H1 (cell line): ENCODE measurements at regions of chr1 and their contacts with region 1.

Region 1: DNA sequence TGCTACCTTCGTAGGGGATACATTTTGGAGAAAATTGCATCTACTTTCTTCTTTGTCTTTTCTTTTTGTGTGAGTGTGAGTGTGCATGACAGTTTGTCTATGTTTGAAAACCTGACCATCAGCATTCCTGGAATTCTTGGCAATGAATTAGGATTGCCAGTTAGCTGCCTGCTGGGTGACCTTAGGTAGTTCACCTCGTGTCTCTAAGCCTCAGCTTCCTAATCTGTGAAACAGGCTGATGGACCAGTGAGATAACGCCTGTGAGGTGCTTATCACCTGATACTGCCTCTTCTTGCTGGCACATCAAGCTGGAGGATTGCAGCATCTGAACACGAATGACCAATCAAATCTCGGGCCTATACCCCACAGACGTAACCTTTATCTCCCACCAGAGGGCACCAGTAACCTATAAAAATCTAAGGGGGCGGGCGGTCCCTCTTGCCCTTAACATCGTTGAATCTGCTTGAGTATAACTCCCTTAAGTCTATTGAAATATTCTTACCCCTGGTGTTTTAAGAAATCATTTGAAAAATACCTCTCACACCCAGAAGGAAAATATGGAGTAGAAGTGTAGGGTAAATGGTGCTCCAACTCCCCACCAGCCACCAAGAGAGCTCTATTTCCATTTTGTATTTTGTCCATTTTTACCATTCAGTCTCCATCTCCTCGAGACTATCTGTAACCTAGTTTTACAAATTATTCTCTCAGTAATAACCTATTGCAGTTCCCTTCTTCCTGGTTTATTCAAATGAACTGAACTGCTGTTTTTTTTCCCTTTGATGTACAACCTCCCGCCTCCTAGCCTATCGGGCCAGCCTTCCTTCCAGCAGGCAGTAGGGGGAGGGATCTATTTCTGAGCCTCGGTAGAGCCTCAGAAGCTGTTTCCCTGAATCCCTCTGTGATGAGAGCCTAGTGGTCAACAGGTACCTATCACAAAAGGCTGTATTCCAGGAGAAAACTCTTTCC is 49.7 kb downstream of the MDM4 start:
- DNase-seq: peak in 1 of 2 experiments; percentile 63
- H3K4me3 ChIP-seq: peak overlapping the region in 1 of 4 experiments; percentile 34; a peak in 2 of 8 replicates
- H3K27ac ChIP-seq: peak overlapping the region; percentile 4; the same call in 1 of the 2 replicates
- H3K4me1 ChIP-seq: peaks cover 3 to 24% (median 13%) of the 10 kb centered on the region in 4 experiments; a peak in 6 of 7 replicates
- H3K27me3 ChIP-seq: no peaks in the 10 kb centered on the region; a peak in 1 of 7 replicates
- CTCF ChIP-seq: peak; percentile 36 to 83 (median 73)
- EP300 ChIP-seq: peak in 1 of 2 experiments; percentile 85; a peak in 1 of 3 replicates
- POLR2A ChIP-seq: no peak
- RAD21 ChIP-seq: peak; percentile 84 to 89

Region 2: DNA sequence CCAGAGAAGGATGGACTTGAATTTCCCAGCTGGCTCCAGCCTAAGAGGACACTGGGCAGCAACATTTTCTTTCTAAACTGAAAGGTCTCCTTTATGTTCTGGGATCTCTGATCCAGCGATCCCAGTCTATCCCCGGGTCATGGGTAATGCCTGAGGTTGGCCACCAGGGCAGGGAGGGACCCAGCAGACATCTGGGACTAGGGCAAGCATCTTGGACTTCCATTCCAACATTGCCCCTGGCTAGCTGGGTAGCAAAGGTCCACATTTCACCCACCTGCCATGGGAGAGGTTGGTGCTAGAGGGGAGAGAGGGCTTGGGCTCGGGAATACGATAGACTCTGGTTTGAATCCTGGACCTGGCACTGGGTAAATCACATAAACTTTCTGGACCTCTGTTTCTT is 35.1 kb after region 1 on chr1:
- CTCF ChIA-PET with region 1: interaction called, 20 read pairs
- POLR2A ChIA-PET with region 1: no interaction called
- DNase-seq: no peak
- H3K4me3 ChIP-seq: no peak overlapping the region
- H3K27ac ChIP-seq: no peak overlapping the region
- H3K4me1 ChIP-seq: peaks cover 10 to 20% (median 11%) of the 10 kb centered on the region in 4 experiments
- H3K27me3 ChIP-seq: no peaks in the 10 kb centered on the region
- CTCF ChIP-seq: peak; percentile 48 to 69 (median 62)
- EP300 ChIP-seq: no peak
- POLR2A ChIP-seq: no peak
- RAD21 ChIP-seq: peak; percentile 24 to 47

Region 3: DNA sequence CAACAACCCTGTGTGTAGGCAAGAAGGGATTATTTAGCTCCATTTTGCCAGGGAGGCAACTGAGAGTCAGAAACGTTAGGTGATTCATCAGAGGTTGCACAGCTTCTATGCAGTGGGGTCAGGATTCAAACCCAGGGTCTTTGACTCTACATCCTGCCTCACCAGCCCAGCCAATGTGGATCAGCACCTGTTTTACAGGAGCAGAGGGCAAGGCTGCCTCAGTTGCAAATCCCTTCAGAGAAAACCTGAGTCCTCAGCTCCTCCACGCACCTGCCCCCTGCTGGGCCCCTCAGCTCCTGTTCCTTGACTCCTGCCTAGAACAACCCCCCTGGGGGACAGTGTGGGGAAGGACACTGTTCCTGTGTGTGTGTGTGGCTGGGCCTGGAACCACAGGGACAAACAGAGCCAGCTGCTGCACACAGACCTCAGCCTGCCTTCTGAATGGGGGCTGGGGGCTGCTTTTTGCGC is 58.0 kb after region 1 on chr1:
- CTCF ChIA-PET with region 1: interaction called, 21 read pairs
- POLR2A ChIA-PET with region 1: interaction called, 3 read pairs
- DNase-seq: no peak
- H3K4me3 ChIP-seq: no peak overlapping the region
- H3K27ac ChIP-seq: no peak overlapping the region
- H3K4me1 ChIP-seq: peaks cover 3 to 11% (median 6%) of the 10 kb centered on the region in 4 experiments; a peak in 6 of 7 replicates
- H3K27me3 ChIP-seq: no peaks in the 10 kb centered on the region
- CTCF ChIP-seq: peak; percentile 40 to 81 (median 44)
- EP300 ChIP-seq: no peak
- POLR2A ChIP-seq: no peak
- RAD21 ChIP-seq: peak; percentile 31 to 48; a peak in 3 of 4 replicates

Region 4: GRCh38 chr1:204685236-204686006 is 119.5 kb after region 1 on chr1 and contains the start of gene LRRN2:
- CTCF ChIA-PET with region 1: interaction called, 16 read pairs
- POLR2A ChIA-PET with region 1: no interaction called
- DNase-seq: peak in 1 of 2 experiments; percentile 66
- H3K4me3 ChIP-seq: peak within 1 kb of the TSS; percentile 43 to 66 (median 60)
- H3K27ac ChIP-seq: no peak within 1 kb of the TSS
- H3K4me1 ChIP-seq: peaks cover 0 to 12% (median 7%) of the 10 kb centered on the region in 4 experiments; a peak in 6 of 7 replicates
- H3K27me3 ChIP-seq: peaks cover 13 to 50% (median 44%) of the 10 kb centered on the region in 4 experiments
- CTCF ChIP-seq: no peak; a peak in 1 of 4 replicates
- EP300 ChIP-seq: no peak
- POLR2A ChIP-seq: no peak
- RAD21 ChIP-seq: no peak
- total RNA-seq, gene LRRN2: 2.3 and 2.5 TPM in 2 replicates

Region 5: DNA sequence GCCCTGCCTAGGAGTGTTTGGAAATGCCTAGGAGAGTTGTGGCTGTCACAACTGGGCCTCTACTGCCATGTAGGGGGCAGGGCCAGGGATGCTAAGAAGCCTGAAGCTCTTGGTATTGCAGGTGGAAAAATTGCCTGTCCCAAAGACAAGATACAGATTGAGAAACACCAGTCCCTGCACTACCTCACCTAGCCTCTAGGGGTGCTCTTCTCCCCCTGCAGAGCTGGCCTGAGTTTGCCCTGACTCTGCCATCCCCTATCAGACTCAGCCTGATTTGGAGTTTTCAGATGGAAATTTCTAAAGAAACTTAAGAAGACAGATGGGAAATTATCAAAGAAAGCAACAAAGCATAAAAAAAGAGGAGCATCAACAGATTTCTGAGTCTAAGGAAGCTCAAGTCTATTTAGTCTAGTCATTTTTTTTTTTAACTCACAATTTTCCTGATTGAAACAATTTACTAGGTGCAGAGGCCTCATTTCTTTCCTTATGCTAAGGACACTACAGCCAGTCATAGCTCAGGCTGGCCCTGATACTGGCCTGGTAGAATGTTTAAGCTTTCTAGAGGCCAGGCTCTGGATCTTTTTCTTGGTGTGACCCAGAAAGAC is 181.0 kb after region 1 on chr1:
- CTCF ChIA-PET with region 1: interaction called, 15 read pairs
- POLR2A ChIA-PET with region 1: no interaction called
- DNase-seq: peak; percentile 43 to 75
- H3K4me3 ChIP-seq: no peak overlapping the region
- H3K27ac ChIP-seq: no peak overlapping the region
- H3K4me1 ChIP-seq: peaks cover 0 to 6% (median 4%) of the 10 kb centered on the region in 4 experiments; a peak in 5 of 7 replicates
- H3K27me3 ChIP-seq: no peaks in the 10 kb centered on the region
- CTCF ChIP-seq: peak; percentile 80 to 97 (median 82)
- EP300 ChIP-seq: no peak
- POLR2A ChIP-seq: no peak
- RAD21 ChIP-seq: peak; percentile 55 to 65